Heart right ventricle (tissue), 16 donors: ENCODE measurements at regions of chr10 and their contacts with region 1.

Region 1: GRCh38 chr10:128069351-128070051 is 56.7 kb downstream of the MKI67 start:
- DNase-seq: peak; percentile 73 to 78
- ATAC-seq: peak; percentile 34 to 77 (median 64)
- H3K4me3 ChIP-seq: no peak overlapping the region
- H3K27ac ChIP-seq: no peak overlapping the region
- H3K4me1 ChIP-seq: peaks cover 0 to 25% (median 11%) of the 10 kb centered on the region in 9 donors
- H3K27me3 ChIP-seq: no peaks in the 10 kb centered on the region
- CTCF ChIP-seq: peak; percentile 74 to 90 (median 88)

Region 2: GRCh38 chr10:127715782-127716378 is 353.6 kb before region 1 on chr10:
- intact Hi-C with region 1: loop called in 3 of 10 experiments (anchors 5 to 10 kb)
- DNase-seq: no peak
- ATAC-seq: no peak
- H3K4me3 ChIP-seq: no peak overlapping the region
- H3K27ac ChIP-seq: no peak overlapping the region
- H3K4me1 ChIP-seq: no peaks in the 10 kb centered on the region
- H3K27me3 ChIP-seq: peaks cover 0 to 14% (median 0%) of the 10 kb centered on the region in 7 donors
- CTCF ChIP-seq: peak in 8 of 9 donors; percentile 12 to 73 (median 51)

Region 3: GRCh38 chr10:127906548-127907377 is 162.7 kb before region 1 on chr10 and contains the start of gene PTPRE:
- intact Hi-C with region 1: loop called (anchors 1 to 5 kb)
- DNase-seq: peak; percentile 70 to 83
- ATAC-seq: peak; percentile 76 to 92 (median 88)
- H3K4me3 ChIP-seq: peak within 1 kb of the TSS; percentile 66 to 92 (median 76)
- H3K27ac ChIP-seq: peak within 1 kb of the TSS; percentile 76 to 96 (median 90)
- H3K4me1 ChIP-seq: peaks cover 2 to 48% (median 33%) of the 10 kb centered on the region in 9 donors
- H3K27me3 ChIP-seq: peaks cover 0 to 6% (median 0%) of the 10 kb centered on the region in 7 donors
- CTCF ChIP-seq: peak; percentile 62 to 98 (median 81)
- total RNA-seq, gene PTPRE: 17.1 to 42.8 (median 23.0) TPM

Region 4: DNA sequence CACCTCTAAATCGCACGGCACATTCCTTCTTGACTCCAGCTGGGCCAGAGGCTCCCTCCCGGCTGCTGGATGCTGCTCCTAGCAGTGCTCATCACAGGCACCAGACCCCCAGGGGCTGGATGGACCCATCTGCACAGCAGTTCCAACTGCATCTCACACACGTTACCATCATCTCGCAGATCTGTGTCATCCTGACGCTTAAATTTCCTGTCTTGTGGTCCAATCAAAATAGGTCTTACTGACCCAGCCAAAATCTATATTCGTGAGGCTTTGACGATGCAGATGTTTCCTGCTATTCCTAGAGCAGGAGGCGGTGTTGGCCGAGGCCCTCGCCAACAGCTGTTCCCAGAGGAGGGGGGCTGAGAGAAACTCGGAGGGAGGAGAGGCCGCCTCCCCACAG is 51.3 kb before region 1 on chr10:
- intact Hi-C with region 1: loop called in 5 of 10 experiments (anchors 5 to 10 kb)
- DNase-seq: peak in 1 of 2 donors; percentile 64
- ATAC-seq: peak in 7 of 8 donors; percentile 39 to 80 (median 55)
- H3K4me3 ChIP-seq: no peak overlapping the region
- H3K27ac ChIP-seq: peak overlapping the region in 1 of 10 donors; percentile 3
- H3K4me1 ChIP-seq: peaks cover 0 to 15% (median 8%) of the 10 kb centered on the region in 9 donors
- H3K27me3 ChIP-seq: no peaks in the 10 kb centered on the region
- CTCF ChIP-seq: no peak

Region 5: GRCh38 chr10:128035557-128035973 is 33.9 kb before region 1 on chr10:
- intact Hi-C with region 1: loop called in 5 of 10 experiments (anchors 1 to 2 kb)
- DNase-seq: peak; percentile 53 to 54
- ATAC-seq: peak in 6 of 8 donors; percentile 44 to 80 (median 62)
- H3K4me3 ChIP-seq: no peak overlapping the region
- H3K27ac ChIP-seq: no peak overlapping the region
- H3K4me1 ChIP-seq: peaks cover 0 to 26% (median 8%) of the 10 kb centered on the region in 9 donors
- H3K27me3 ChIP-seq: no peaks in the 10 kb centered on the region
- CTCF ChIP-seq: peak; percentile 42 to 88 (median 76)